G401 (cell line): ENCODE measurements at regions of chr17 and their contacts with region 1.

Region 1: GRCh38 chr17:45650561-45650960 is 133.6 kb upstream of the CRHR1 start:
- DNase-seq: peak; percentile 46

Region 2: GRCh38 chr17:45247429-45248131 is 403.0 kb before region 1 on chr17:
- in situ Hi-C with region 1: no loop called
- DNase-seq: peak; percentile 91

Region 3: GRCh38 chr17:45688353-45688752 is 37.8 kb after region 1 on chr17:
- in situ Hi-C with region 1: loop called (anchors 5 kb)
- DNase-seq: peak; percentile 69

Region 4: GRCh38 chr17:45747911-45748310 is 97.3 kb after region 1 on chr17:
- in situ Hi-C with region 1: no loop called
- DNase-seq: no peak